ENCODE measurements at regions of chr15 and their contacts with region 1.

Region 1: DNA sequence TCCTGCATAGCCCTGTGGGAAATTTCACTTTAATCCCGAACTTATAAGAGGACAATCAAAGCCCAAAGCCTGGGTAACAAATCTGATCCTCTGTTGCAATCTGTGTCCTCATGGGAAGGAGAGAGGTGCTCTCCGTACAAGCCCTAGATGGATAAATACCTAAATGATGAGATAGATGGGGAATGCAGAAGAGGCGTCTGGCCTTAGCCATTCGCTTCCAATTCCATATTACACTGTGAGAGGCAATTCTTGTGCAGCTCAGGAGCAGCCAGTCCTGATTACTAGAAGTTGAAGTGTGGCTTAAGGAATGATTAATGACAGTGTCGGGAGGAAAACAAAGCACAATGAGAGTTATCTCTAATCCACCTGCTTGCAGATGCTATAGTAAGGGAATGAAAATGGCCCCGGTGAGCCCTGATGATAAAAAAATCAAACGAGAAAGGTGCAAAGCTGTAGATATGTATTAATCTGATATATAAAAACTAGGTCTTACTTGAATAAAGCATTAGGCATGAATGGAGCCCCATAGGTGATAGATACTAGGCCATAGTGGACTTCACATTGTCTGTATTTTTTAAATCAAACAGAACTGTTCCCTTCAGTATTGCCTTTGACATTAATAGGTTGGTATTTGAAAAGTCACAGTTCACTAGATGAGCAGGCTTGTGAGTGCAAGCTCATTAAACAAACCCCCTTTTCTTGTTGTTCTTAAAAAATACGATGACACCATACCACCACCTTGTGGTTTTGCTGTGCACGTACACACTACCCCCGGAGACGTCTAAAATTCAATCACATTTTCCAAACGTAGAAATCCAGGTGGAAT is 54.2 kb upstream of the TMCO5A start:
- DNase-seq: peak; percentile 74
- H3K4me3 ChIP-seq: no peak overlapping the region
- H3K27ac ChIP-seq: peak overlapping the region; percentile 33
- H3K4me1 ChIP-seq: peaks cover 31% of the 10 kb centered on the region
- H3K27me3 ChIP-seq: no peaks in the 10 kb centered on the region
- CTCF ChIP-seq: peak; percentile 89

Region 2: GRCh38 chr15:35944945-35945585 is 1935.2 kb before region 1 on chr15:
- CTCF ChIA-PET with region 1: no interaction called
- POLR2A ChIA-PET with region 1: no interaction called
- intact Hi-C with region 1: no loop called
- DNase-seq: no peak
- H3K4me3 ChIP-seq: no peak overlapping the region
- H3K27ac ChIP-seq: no peak overlapping the region
- H3K4me1 ChIP-seq: no peaks in the 10 kb centered on the region
- H3K27me3 ChIP-seq: no peaks in the 10 kb centered on the region
- CTCF ChIP-seq: no peak

Region 3: DNA sequence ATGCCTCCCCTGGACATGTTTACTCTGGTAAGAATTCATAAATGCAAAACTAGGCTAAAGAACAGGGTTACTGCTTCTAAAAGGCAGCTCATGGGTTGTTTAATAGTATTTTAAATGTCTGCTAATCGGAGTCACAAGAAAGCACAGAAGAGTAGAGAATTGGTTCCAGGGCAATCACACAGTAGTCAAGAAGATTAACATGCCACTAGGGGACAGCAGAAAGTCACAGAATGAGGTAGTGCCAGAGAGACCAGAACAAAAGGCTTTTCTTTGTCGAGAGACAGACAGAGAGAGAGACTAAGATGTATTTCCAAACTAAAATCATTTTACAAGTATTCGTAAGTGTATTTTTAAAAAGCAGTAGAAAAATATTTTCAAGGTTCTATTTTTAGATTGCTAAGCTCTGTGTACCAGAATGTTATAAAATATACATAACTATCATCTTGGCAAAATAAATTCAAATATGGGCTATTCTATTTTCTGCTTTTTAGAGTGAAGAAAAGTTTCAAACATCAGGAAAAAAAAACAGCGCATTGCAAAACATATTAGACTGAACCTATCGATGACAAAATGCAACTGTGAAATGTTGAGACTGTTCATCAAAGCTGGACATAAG is 1379.1 kb before region 1 on chr15:
- CTCF ChIA-PET with region 1: no interaction called
- POLR2A ChIA-PET with region 1: no interaction called
- intact Hi-C with region 1: loop called (anchors 5 kb)
- DNase-seq: peak; percentile 78
- H3K4me3 ChIP-seq: no peak overlapping the region
- H3K27ac ChIP-seq: no peak overlapping the region
- H3K4me1 ChIP-seq: peaks cover 4% of the 10 kb centered on the region
- H3K27me3 ChIP-seq: no peaks in the 10 kb centered on the region
- CTCF ChIP-seq: peak; percentile 75

Region 4: DNA sequence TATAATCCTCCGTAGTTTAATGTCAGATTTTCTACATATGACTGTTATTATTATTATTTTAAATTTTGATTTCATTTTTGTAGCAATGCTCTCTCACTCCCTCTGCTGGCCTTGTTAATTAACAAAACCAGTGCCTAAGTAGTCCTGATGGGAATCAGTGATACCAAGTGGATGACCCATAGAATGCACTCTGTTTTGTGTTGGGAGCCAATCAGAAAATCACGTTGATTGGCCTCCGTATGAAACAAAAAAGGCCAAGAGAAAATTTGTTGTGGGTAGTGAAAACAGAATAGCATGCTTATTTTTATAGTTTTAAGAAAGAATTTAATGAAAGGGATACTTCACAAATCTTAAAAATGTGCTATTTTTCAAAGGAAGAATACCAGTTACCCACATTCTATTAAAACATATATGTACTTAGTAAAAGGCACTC is 745.5 kb before region 1 on chr15:
- CTCF ChIA-PET with region 1: interaction called, 4 read pairs
- POLR2A ChIA-PET with region 1: no interaction called
- intact Hi-C with region 1: loop called (anchors 10 kb)
- DNase-seq: peak; percentile 43
- H3K4me3 ChIP-seq: no peak overlapping the region
- H3K27ac ChIP-seq: no peak overlapping the region
- H3K4me1 ChIP-seq: no peaks in the 10 kb centered on the region
- H3K27me3 ChIP-seq: no peaks in the 10 kb centered on the region
- CTCF ChIP-seq: peak; percentile 70

Region 5: GRCh38 chr15:37682304-37682703 is 197.9 kb before region 1 on chr15:
- CTCF ChIA-PET with region 1: no interaction called
- POLR2A ChIA-PET with region 1: interaction called, 5 read pairs
- intact Hi-C with region 1: loop called (anchors 2 kb)
- DNase-seq: peak; percentile 30
- H3K4me3 ChIP-seq: no peak overlapping the region
- H3K27ac ChIP-seq: no peak overlapping the region
- H3K4me1 ChIP-seq: no peaks in the 10 kb centered on the region
- H3K27me3 ChIP-seq: no peaks in the 10 kb centered on the region
- CTCF ChIP-seq: peak; percentile 48

Region 6: GRCh38 chr15:37764733-37765191 is 115.5 kb before region 1 on chr15:
- CTCF ChIA-PET with region 1: interaction called, 19 read pairs
- POLR2A ChIA-PET with region 1: no interaction called
- intact Hi-C with region 1: no loop called
- DNase-seq: peak; percentile 90
- H3K4me3 ChIP-seq: peak overlapping the region; percentile 6
- H3K27ac ChIP-seq: peak overlapping the region; percentile 74
- H3K4me1 ChIP-seq: peaks cover 21% of the 10 kb centered on the region
- H3K27me3 ChIP-seq: no peaks in the 10 kb centered on the region
- CTCF ChIP-seq: peak; percentile 86